Left colon (tissue), 2 donors: ENCODE measurements at regions of chr15 and their contacts with region 1.

Region 1: GRCh38 chr15:26670116-26670515 is 102.8 kb downstream of the GABRB3 start:
- DNase-seq: no peak
- ATAC-seq: no peak

Region 2: GRCh38 chr15:26340376-26340775 is 329.7 kb before region 1 on chr15:
- intact Hi-C with region 1: no loop called
- DNase-seq: no peak
- ATAC-seq: no peak

Region 3: GRCh38 chr15:26615188-26615926 is 54.8 kb before region 1 on chr15:
- intact Hi-C with region 1: loop called in 1 of 2 experiments (anchors 10 kb)
- DNase-seq: no peak
- ATAC-seq: no peak